ENCODE measurements at regions of chr14 and their contacts with region 1.

Region 1: DNA sequence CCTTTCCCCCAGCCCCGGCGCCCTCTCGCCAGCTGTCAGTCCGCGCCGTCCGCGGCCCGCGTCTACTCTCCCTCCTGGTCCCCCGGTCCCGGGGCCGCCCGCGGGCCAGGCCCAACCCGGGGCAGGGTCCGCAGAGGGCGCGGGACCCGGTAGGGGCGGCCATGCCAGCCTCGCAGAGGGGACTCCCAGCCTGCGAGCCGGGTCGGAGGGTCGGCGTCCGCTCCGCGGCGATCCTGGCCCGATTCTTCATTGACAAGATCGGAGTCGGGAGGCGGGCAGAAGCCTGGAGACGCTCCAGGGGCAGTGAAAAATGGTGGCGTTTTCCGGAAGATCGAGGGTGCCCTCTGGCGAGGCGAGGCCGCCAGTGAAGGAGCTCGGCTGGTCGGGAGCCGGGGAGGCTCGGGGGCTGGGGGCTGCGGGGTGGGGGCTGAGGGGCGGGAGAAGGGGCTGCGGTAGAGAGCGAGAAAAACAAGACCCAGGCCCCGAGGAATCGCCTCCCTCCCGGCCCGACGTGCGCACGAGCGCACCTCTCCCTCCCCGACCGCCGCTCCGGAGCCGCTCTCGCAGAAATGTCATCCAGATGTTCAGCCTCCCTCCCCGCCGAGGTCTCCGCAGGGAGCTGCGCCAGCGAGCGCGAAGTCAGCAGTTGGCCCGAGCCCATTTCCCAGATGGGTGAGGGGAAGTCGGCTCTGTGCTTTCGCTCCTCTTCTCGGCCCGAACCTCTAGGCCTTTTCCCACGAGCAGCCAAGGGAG is 647 bp upstream of the TGFB3 start:
- DNase-seq: peak; percentile 88
- H3K4me3 ChIP-seq: peak overlapping the region; percentile 83
- H3K27ac ChIP-seq: peak overlapping the region; percentile 86
- H3K4me1 ChIP-seq: peaks cover 10% of the 10 kb centered on the region
- H3K27me3 ChIP-seq: no peaks in the 10 kb centered on the region
- CTCF ChIP-seq: peak; percentile 44

Region 2: DNA sequence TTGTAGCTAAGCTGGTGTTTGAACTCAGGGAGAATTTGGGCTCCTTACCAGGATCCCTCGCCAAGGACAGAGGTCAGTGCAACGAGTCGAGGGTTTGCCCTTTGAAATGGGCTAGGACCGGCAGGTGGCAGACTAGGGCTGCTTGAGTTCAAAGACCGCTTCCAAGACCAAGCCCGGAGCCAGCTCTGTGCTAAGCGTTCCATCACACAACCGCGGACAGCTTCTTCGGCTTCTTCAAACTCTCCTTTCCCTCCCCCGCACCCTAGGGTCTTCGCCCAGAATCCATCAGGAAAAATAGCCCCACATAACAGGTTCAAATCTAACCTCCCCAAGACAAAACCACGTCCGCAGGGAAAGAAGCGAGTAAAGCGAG is 404.7 kb before region 1 on chr14:
- intact Hi-C with region 1: loop called (anchors 5 kb)
- DNase-seq: peak; percentile 91
- H3K4me3 ChIP-seq: peak overlapping the region; percentile 57
- H3K27ac ChIP-seq: peak overlapping the region; percentile 83
- H3K4me1 ChIP-seq: peaks cover 12% of the 10 kb centered on the region
- H3K27me3 ChIP-seq: no peaks in the 10 kb centered on the region
- CTCF ChIP-seq: peak; percentile 64

Region 3: GRCh38 chr14:75709207-75709812 is 273.1 kb before region 1 on chr14:
- intact Hi-C with region 1: loop called (anchors 2 kb)
- DNase-seq: peak; percentile 76
- H3K4me3 ChIP-seq: no peak overlapping the region
- H3K27ac ChIP-seq: no peak overlapping the region
- H3K4me1 ChIP-seq: no peaks in the 10 kb centered on the region
- H3K27me3 ChIP-seq: no peaks in the 10 kb centered on the region
- CTCF ChIP-seq: peak; percentile 64

Region 4: DNA sequence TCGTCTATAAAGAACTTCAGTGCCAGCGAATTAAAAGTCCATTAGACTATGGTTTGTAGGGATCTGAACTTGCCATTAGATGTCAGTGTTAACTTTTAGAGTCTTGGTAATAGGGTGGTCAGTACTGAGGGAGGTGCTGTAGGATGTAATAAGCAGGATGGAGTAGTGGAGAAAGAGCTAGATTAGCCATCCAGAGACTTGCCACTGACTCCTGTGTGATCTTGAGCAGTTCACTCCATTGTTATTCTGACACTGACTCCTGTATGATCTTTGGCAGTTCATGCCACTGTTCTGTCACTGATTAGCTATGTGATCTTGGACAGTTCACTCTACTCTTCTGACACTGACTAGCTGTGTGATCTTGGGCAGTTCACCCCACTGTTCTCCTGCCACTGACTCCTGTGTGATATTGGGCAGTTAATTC is 187.8 kb before region 1 on chr14:
- intact Hi-C with region 1: loop called (anchors 5 kb)
- DNase-seq: no peak
- H3K4me3 ChIP-seq: no peak overlapping the region
- H3K27ac ChIP-seq: no peak overlapping the region
- H3K4me1 ChIP-seq: no peaks in the 10 kb centered on the region
- H3K27me3 ChIP-seq: no peaks in the 10 kb centered on the region
- CTCF ChIP-seq: peak; percentile 17

Region 5: DNA sequence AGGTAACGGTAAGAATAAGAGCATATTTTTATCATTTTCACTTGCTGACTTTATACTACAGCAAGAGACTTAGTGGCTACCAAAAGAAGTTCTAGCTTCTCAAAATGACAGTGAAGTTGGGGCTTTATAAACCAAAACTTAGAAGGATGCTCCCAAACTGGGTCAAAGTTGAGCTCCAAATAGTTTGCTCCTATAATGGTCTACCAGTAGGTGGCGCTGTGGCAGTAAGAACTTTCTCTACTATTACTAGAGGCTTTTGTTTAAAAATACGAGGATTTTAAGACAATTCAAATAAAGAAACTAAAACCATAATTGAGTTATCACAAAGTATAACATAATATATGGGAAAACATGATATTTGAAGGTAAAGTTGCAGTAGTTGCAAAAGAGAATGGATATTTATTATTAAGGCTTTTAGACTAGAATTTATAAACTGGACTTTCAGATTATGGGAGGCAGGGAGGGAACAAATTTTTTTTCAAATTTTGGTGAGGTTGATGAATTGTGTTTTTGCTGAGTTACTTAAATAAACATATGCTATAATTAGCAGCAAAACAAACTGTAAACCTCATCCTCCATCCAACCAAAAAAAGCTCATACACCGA is 75.7 kb before region 1 on chr14:
- intact Hi-C with region 1: loop called (anchors 2 kb)
- DNase-seq: peak; percentile 78
- H3K4me3 ChIP-seq: no peak overlapping the region
- H3K27ac ChIP-seq: no peak overlapping the region
- H3K4me1 ChIP-seq: no peaks in the 10 kb centered on the region
- H3K27me3 ChIP-seq: no peaks in the 10 kb centered on the region
- CTCF ChIP-seq: peak; percentile 93

Region 6: GRCh38 chr14:76261371-76261811 is 278.9 kb after region 1 on chr14:
- intact Hi-C with region 1: no loop called
- DNase-seq: no peak
- H3K4me3 ChIP-seq: no peak overlapping the region
- H3K27ac ChIP-seq: no peak overlapping the region
- H3K4me1 ChIP-seq: no peaks in the 10 kb centered on the region
- H3K27me3 ChIP-seq: no peaks in the 10 kb centered on the region
- CTCF ChIP-seq: no peak

Measured in colonic mucosa (tissue), 4 donors.